Heart right ventricle (tissue), 16 donors: ENCODE measurements at regions of chr2 and their contacts with region 1.

Region 1: GRCh38 chr2:4947911-4948310 is 744.3 kb upstream of the SOX11 start:
- DNase-seq: no peak
- ATAC-seq: no peak
- H3K4me3 ChIP-seq: no peak overlapping the region
- H3K27ac ChIP-seq: no peak overlapping the region
- H3K4me1 ChIP-seq: no peaks in the 10 kb centered on the region
- H3K27me3 ChIP-seq: no peaks in the 10 kb centered on the region
- CTCF ChIP-seq: no peak

Region 2: DNA sequence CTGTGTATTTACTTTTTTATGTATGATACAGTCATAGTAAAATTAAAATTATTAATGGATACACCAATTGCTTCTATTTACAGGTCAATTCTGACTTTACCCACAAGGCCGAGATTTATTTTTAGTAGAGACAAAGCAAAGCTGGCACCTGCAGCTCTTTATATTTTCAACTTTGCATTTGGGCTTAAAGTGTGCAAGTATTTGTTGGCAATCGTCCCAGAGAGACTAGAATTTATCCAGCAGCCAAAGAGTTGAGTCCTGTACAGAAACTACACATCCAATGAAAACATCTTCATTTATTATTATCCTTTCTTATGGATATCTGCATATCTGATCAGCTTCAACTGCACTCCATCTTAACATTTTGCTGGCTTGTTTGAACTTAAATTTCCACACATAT is 1229.9 kb after region 1 on chr2:
- intact Hi-C with region 1: loop called in 1 of 10 experiments (anchors 10 kb)
- DNase-seq: no peak
- ATAC-seq: no peak
- H3K4me3 ChIP-seq: no peak overlapping the region
- H3K27ac ChIP-seq: no peak overlapping the region
- H3K4me1 ChIP-seq: peaks cover 0 to 8% (median 0%) of the 10 kb centered on the region in 9 donors
- H3K27me3 ChIP-seq: no peaks in the 10 kb centered on the region
- CTCF ChIP-seq: no peak